Pancreas (tissue), 10 donors: ENCODE measurements at regions of chr4 and their contacts with region 1.

Region 1: GRCh38 chr4:87073199-87074120 is 138.6 kb downstream of the AFF1 start:
- DNase-seq: no peak
- ATAC-seq: peak; percentile 36 to 72 (median 64)
- H3K4me3 ChIP-seq: no peak overlapping the region
- H3K27ac ChIP-seq: peak overlapping the region in 3 of 4 donors; percentile 30 to 73 (median 63)
- H3K4me1 ChIP-seq: peaks cover 7 to 66% (median 55%) of the 10 kb centered on the region in 3 donors
- H3K27me3 ChIP-seq: no peaks in the 10 kb centered on the region
- CTCF ChIP-seq: no peak

Region 2: DNA sequence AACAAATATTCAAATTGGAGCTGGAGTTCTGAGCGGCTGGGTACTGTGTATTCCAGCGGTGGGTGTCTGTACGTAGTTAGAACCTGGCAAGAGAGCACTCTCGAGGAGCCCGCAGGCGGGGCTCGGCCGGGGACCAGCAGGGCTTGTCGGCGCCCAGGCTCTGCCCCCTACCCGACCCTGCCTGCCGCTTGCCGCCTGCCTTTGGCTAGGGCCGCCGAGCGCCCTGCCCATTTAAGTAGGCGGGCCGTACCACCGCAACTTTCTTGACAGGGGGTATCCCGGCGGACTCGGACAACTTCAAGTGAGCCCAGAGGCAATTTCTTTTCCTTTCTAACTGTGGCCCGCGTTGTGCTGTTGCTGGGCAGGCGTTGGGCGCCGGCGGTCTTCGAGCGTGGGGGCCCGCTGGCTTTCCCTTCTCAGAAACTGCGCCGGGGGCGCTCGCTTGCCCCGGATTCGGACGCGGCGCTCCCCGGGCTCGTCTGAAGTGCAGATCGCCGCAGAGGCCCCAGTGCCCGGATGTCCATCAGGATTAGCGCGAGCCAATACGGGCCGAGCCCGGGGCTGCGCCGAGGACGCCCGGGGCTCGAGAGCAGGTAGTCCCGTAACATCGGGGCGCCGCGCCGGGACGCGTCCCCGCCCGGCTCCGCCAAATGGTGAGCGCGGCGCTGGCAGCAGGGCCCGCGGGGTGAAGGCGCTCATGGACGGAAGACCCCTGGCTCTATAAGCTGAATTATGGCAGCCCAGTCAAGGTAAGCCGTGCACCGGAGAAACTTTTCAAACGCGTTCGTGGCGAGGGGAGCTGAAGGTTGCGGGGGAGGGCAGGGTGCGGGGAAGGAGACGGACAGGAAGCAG is 66.6 kb before region 1 on chr4:
- intact Hi-C with region 1: loop called in 2 of 3 experiments (anchors 10 kb)
- DNase-seq: peak; percentile 92 to 98 (median 94)
- ATAC-seq: peak; percentile 86 to 94 (median 93)
- H3K4me3 ChIP-seq: peak overlapping the region; percentile 46 to 67 (median 60)
- H3K27ac ChIP-seq: peak overlapping the region; percentile 94 to 98 (median 96)
- H3K4me1 ChIP-seq: peaks cover 17 to 52% (median 43%) of the 10 kb centered on the region in 3 donors
- H3K27me3 ChIP-seq: no peaks in the 10 kb centered on the region
- CTCF ChIP-seq: no peak

Region 3: DNA sequence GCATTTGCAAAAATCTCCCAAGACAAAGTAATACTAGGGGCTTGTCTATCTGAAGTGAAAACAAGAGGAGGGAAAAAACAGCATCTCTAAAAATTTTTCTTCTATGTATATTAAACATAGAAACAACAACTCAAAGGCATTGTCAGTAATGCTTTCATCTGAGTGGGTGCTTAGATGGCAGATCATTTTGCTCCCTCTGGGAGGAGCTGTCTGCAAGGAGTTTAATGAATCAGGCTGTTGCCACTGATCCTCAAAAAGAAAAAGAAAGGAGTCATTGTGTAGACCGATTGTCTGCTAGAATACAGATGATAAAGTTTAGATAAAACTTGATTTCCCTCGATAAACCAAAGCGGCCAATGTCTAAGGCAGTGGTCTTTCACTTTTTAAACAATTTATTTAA is 196.7 kb after region 1 on chr4:
- intact Hi-C with region 1: no loop called
- DNase-seq: peak in 3 of 6 donors; percentile 6 to 40 (median 16)
- ATAC-seq: peak; percentile 71 to 94 (median 91)
- H3K4me3 ChIP-seq: no peak overlapping the region
- H3K27ac ChIP-seq: no peak overlapping the region
- H3K4me1 ChIP-seq: no peaks in the 10 kb centered on the region
- H3K27me3 ChIP-seq: no peaks in the 10 kb centered on the region
- CTCF ChIP-seq: peak in 2 of 4 donors; percentile 20 to 32